IMR-90 (cell line): ENCODE measurements at regions of chr17 and their contacts with region 1.

Region 1: GRCh38 chr17:67855504-67856324 is 30.4 kb downstream of the BPTF start:
- DNase-seq: no peak
- ATAC-seq: no peak
- H3K4me3 ChIP-seq: no peak overlapping the region
- H3K27ac ChIP-seq: no peak overlapping the region
- H3K4me1 ChIP-seq: peaks cover 2% of the 10 kb centered on the region
- H3K27me3 ChIP-seq: no peaks in the 10 kb centered on the region
- CTCF ChIP-seq: no peak
- POLR2A ChIP-seq: no peak
- RAD21 ChIP-seq: no peak

Region 2: GRCh38 chr17:68210570-68211315 is 355.0 kb after region 1 on chr17:
- CTCF ChIA-PET with region 1: no interaction called
- POLR2A ChIA-PET with region 1: no interaction called
- dilution Hi-C with region 1: no loop called
- in situ Hi-C with region 1: no loop called
- intact Hi-C with region 1: loop called (anchors 5 kb)
- DNase-seq: no peak
- ATAC-seq: no peak
- H3K4me3 ChIP-seq: no peak overlapping the region
- H3K27ac ChIP-seq: no peak overlapping the region
- H3K4me1 ChIP-seq: no peaks in the 10 kb centered on the region
- H3K27me3 ChIP-seq: no peaks in the 10 kb centered on the region
- CTCF ChIP-seq: no peak
- POLR2A ChIP-seq: no peak
- RAD21 ChIP-seq: no peak